Right cardiac atrium (tissue), 5 donors: ENCODE measurements at regions of chr12 and their contacts with region 1.

Region 1: GRCh38 chr12:70645494-70646317 is 8.5 kb upstream of the PTPRB start:
- DNase-seq: peak; percentile 68 to 85 (median 77)
- ATAC-seq: peak; percentile 95 to 98
- H3K4me3 ChIP-seq: no peak overlapping the region
- H3K27ac ChIP-seq: peak overlapping the region; percentile 83
- H3K4me1 ChIP-seq: peaks cover 5% of the 10 kb centered on the region
- H3K27me3 ChIP-seq: no peaks in the 10 kb centered on the region

Region 2: DNA sequence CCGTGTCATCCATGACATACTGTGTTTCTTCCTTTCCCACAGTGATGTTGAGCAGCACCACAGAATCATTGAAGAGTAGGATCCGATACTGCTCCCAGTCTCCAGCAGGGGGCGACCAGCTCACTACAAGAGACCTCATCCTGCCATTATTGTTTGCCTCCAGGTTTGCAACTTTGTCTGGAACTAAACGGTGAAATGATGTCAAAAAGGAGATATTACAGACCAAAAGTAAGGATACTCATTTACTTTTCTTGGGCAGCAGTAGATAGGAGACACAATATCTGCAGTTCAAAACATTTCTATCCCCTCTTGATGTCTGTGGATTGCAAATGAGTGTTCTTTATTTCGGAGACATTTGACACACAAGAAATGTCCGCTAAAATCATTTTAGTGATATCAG is 55.7 kb before region 1 on chr12:
- intact Hi-C with region 1: loop called in 1 of 4 experiments (anchors 10 kb)
- DNase-seq: peak; percentile 67 to 89 (median 81)
- ATAC-seq: peak; percentile 71 to 89
- H3K4me3 ChIP-seq: no peak overlapping the region
- H3K27ac ChIP-seq: no peak overlapping the region
- H3K4me1 ChIP-seq: no peaks in the 10 kb centered on the region
- H3K27me3 ChIP-seq: no peaks in the 10 kb centered on the region

Region 3: GRCh38 chr12:70609711-70610491 is 35.8 kb before region 1 on chr12:
- intact Hi-C with region 1: loop called in 1 of 4 experiments (anchors 5 kb)
- DNase-seq: peak; percentile 70 to 87 (median 84)
- ATAC-seq: peak; percentile 92 to 93
- H3K4me3 ChIP-seq: peak overlapping the region; percentile 70
- H3K27ac ChIP-seq: peak overlapping the region; percentile 89
- H3K4me1 ChIP-seq: no peaks in the 10 kb centered on the region
- H3K27me3 ChIP-seq: no peaks in the 10 kb centered on the region

Region 4: GRCh38 chr12:70812151-70812550 is 166.4 kb after region 1 on chr12:
- intact Hi-C with region 1: no loop called
- DNase-seq: no peak
- ATAC-seq: no peak
- H3K4me3 ChIP-seq: no peak overlapping the region
- H3K27ac ChIP-seq: no peak overlapping the region
- H3K4me1 ChIP-seq: no peaks in the 10 kb centered on the region
- H3K27me3 ChIP-seq: no peaks in the 10 kb centered on the region